CD4-positive, alpha-beta memory T cell (primary cell): ENCODE measurements at regions of chr12 and their contacts with region 1.

Region 1: GRCh38 chr12:57583008-57583831 is 7.8 kb upstream of the PIP4K2C start:
- DNase-seq: peak; percentile 70 to 77 (median 74)
- H3K4me3 ChIP-seq: no peak overlapping the region
- H3K4me3 Mint-ChIP-seq: no peak overlapping the region
- H3K27ac ChIP-seq: no peak overlapping the region
- H3K27ac Mint-ChIP-seq: peak overlapping the region in 2 of 7 donors; percentile 26 to 38
- H3K4me1 ChIP-seq: no peaks in the 10 kb centered on the region
- H3K4me1 Mint-ChIP-seq: peaks cover 3 to 7% (median 5%) of the 10 kb centered on the region in 4 donors
- H3K27me3 ChIP-seq: no peaks in the 10 kb centered on the region
- H3K27me3 Mint-ChIP-seq: peaks cover 6 to 9% of the 10 kb centered on the region in 2 donors

Region 2: GRCh38 chr12:57111031-57111734 is 472.0 kb before region 1 on chr12 and contains the start of gene STAT6:
- CTCF ChIA-PET with region 1: no interaction called
- POLR2A ChIA-PET with region 1: no interaction called
- intact Hi-C with region 1: no loop called
- DNase-seq: peak; percentile 87 to 96 (median 90)
- H3K4me3 ChIP-seq: peak within 1 kb of the TSS; percentile 90 to 99
- H3K4me3 Mint-ChIP-seq: peak within 1 kb of the TSS; percentile 93 to 100 (median 96)
- H3K27ac ChIP-seq: peak within 1 kb of the TSS; percentile 93
- H3K27ac Mint-ChIP-seq: peak within 1 kb of the TSS; percentile 94 to 100 (median 98)
- H3K4me1 ChIP-seq: peaks cover 34% of the 10 kb centered on the region
- H3K4me1 Mint-ChIP-seq: peaks cover 28 to 64% (median 38%) of the 10 kb centered on the region in 4 donors
- H3K27me3 ChIP-seq: no peaks in the 10 kb centered on the region
- H3K27me3 Mint-ChIP-seq: peaks cover 0 to 4% of the 10 kb centered on the region in 2 donors
- total RNA-seq, gene STAT6: 399 to 424 TPM

Region 3: DNA sequence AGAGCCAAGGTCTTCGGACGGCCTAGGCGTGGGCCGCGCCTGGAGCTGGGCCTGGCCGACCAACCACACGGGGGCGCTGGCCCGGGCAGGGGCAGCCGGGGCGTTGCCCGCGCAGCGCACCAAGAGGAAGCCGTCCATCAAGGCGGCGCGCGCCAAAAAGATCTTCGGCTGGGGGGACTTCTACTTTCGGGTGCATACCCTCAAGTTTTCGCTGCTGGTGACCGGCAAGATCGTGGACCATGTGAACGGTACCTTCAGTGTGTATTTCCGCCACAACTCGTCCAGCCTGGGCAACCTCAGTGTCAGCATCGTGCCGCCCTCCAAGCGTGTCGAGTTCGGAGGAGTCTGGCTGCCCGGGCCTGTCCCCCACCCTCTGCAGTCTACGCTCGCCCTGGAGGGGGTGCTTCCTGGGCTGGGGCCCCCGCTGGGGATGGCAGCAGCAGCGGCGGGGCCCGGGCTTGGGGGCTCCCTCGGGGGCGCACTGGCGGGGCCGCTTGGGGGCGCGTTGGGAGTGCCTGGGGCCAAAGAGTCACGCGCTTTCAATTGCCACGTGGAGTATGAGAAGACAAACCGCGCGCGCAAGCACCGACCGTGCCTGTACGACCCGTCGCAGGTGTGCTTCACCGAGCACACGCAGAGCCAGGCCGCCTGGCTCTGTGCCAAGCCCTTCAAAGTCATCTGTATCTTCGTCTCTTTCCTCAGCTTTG is 358.1 kb before region 1 on chr12:
- CTCF ChIA-PET with region 1: no interaction called
- POLR2A ChIA-PET with region 1: no interaction called
- intact Hi-C with region 1: no loop called
- DNase-seq: peak; percentile 56 to 71 (median 65)
- H3K4me3 ChIP-seq: no peak overlapping the region
- H3K4me3 Mint-ChIP-seq: peak overlapping the region in 7 of 8 donors; percentile 45 to 74 (median 60)
- H3K27ac ChIP-seq: no peak overlapping the region
- H3K27ac Mint-ChIP-seq: peak overlapping the region in 4 of 7 donors; percentile 17 to 81 (median 42)
- H3K4me1 ChIP-seq: peaks cover 52% of the 10 kb centered on the region
- H3K4me1 Mint-ChIP-seq: peaks cover 31 to 70% (median 45%) of the 10 kb centered on the region in 4 donors
- H3K27me3 ChIP-seq: peaks cover 59% of the 10 kb centered on the region
- H3K27me3 Mint-ChIP-seq: peaks cover 45 to 53% of the 10 kb centered on the region in 2 donors

Region 4: GRCh38 chr12:57546438-57547383 is 36.5 kb before region 1 on chr12 and contains the start of gene DCTN2:
- CTCF ChIA-PET with region 1: no interaction called
- POLR2A ChIA-PET with region 1: no interaction called
- intact Hi-C with region 1: no loop called
- DNase-seq: peak; percentile 91 to 97 (median 93)
- H3K4me3 ChIP-seq: peak within 1 kb of the TSS; percentile 54 to 71
- H3K4me3 Mint-ChIP-seq: peak within 1 kb of the TSS; percentile 93 to 100 (median 98)
- H3K27ac ChIP-seq: peak within 1 kb of the TSS; percentile 84
- H3K27ac Mint-ChIP-seq: peak within 1 kb of the TSS; percentile 84 to 99 (median 97)
- H3K4me1 ChIP-seq: peaks cover 37% of the 10 kb centered on the region
- H3K4me1 Mint-ChIP-seq: peaks cover 32 to 53% (median 42%) of the 10 kb centered on the region in 4 donors
- H3K27me3 ChIP-seq: no peaks in the 10 kb centered on the region
- H3K27me3 Mint-ChIP-seq: peaks cover 2 to 4% of the 10 kb centered on the region in 2 donors
- total RNA-seq, gene DCTN2: 69.4 to 70.7 TPM

Region 5: DNA sequence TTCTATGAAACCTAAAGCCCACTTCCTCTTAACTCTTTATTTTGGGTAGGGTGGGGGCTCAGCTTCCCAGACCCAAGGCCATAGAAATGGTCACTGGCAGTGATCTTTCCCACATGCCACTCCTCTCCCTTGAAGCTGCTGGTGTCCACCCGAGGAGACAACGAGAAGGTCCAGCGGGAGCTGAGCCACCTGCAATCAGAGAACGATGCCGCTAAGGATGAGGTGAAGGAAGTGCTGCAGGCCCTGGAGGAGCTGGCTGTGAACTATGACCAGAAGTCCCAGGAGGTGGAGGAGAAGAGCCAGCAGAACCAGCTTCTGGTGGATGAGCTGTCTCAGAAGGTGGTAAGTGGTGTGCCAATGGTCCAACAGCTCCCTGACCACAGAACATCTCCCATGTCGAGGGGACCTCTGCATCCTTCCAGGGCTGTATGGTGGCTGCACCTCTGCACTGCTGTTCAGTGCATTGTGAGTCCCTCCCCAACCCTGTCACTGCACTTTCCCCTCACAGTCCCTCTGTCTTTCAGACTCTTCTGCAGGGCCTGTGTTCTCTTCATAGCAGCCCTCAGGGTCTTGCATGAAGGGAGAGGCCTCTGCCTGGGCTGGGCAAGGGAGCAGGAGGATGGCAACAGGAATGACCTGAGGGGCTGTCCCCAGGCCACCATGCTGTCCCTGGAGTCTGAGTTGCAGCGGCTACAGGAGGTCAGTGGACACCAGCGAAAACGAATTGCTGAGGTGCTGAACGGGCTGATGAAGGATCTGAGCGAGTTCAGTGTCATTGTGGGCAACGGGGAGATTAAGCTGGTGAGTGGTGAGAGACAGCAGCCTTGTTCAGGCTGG is 11.1 kb before region 1 on chr12:
- CTCF ChIA-PET with region 1: interaction called, 11 read pairs
- POLR2A ChIA-PET with region 1: no interaction called
- intact Hi-C with region 1: no loop called
- DNase-seq: no peak
- H3K4me3 ChIP-seq: no peak overlapping the region
- H3K4me3 Mint-ChIP-seq: no peak overlapping the region
- H3K27ac ChIP-seq: no peak overlapping the region
- H3K27ac Mint-ChIP-seq: no peak overlapping the region
- H3K4me1 ChIP-seq: no peaks in the 10 kb centered on the region
- H3K4me1 Mint-ChIP-seq: no peaks in the 10 kb centered on the region
- H3K27me3 ChIP-seq: no peaks in the 10 kb centered on the region
- H3K27me3 Mint-ChIP-seq: peaks cover 0 to 9% of the 10 kb centered on the region in 2 donors

Region 6: DNA sequence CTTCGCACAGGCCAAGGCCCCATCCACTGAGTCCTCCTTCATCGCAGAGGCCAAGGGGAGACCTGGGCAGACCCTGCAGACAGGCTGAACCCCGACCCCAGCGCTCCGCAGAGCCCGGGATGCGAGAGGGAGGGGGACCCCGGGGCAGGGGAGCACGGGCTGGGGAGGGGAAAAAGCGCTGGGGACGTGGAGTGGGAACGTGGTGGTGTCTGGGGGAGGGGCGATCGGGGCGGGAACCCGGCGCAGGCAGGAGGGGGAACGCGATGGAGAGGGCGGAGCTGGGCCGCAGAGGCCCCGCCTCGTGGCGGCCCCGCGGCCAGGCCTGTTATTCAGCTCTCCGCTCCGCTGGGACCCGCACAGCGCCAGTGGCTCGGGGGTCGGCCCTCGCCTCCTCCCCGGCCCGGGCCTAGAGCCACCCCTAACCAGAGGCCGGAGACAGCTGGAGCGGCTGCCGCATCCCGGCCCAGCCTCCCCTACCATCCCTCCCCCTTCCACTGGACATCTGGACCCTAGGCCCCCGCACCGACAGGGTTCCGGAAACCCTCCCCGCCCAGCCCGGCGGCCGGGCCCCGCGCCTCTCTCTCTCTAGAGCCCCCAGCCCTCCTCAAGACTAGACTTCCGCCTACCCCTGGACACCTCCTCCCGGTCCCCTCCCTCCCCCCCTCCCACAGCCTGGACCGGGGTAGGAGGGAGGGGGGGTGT is 28.0 kb after region 1 on chr12 and contains the start of gene ARHGEF25:
- CTCF ChIA-PET with region 1: interaction called, 36 read pairs
- POLR2A ChIA-PET with region 1: no interaction called
- intact Hi-C with region 1: no loop called
- DNase-seq: no peak
- H3K4me3 ChIP-seq: peak within 1 kb of the TSS; percentile 23 to 57
- H3K4me3 Mint-ChIP-seq: peak within 1 kb of the TSS; percentile 74 to 89 (median 80)
- H3K27ac ChIP-seq: no peak within 1 kb of the TSS
- H3K27ac Mint-ChIP-seq: peak within 1 kb of the TSS in 4 of 7 donors; percentile 15 to 78 (median 57)
- H3K4me1 ChIP-seq: peaks cover 9% of the 10 kb centered on the region
- H3K4me1 Mint-ChIP-seq: peaks cover 3 to 17% (median 9%) of the 10 kb centered on the region in 4 donors
- H3K27me3 ChIP-seq: peaks cover 10% of the 10 kb centered on the region
- H3K27me3 Mint-ChIP-seq: peaks cover 3 to 21% of the 10 kb centered on the region in 2 donors
- total RNA-seq, gene ARHGEF25: 0.47 to 0.67 TPM

Region 7: GRCh38 chr12:57632694-57633477 is 49.7 kb after region 1 on chr12 and contains the start of gene B4GALNT1:
- CTCF ChIA-PET with region 1: interaction called, 124 read pairs
- POLR2A ChIA-PET with region 1: no interaction called
- intact Hi-C with region 1: loop called (anchors 1 kb)
- DNase-seq: peak in 4 of 5 donors; percentile 57 to 70 (median 61)
- H3K4me3 ChIP-seq: peak within 1 kb of the TSS in 1 of 2 donors; percentile 45
- H3K4me3 Mint-ChIP-seq: peak within 1 kb of the TSS; percentile 31 to 85 (median 74)
- H3K27ac ChIP-seq: no peak within 1 kb of the TSS
- H3K27ac Mint-ChIP-seq: peak within 1 kb of the TSS in 1 of 7 donors; percentile 17
- H3K4me1 ChIP-seq: peaks cover 13% of the 10 kb centered on the region
- H3K4me1 Mint-ChIP-seq: peaks cover 7 to 13% (median 9%) of the 10 kb centered on the region in 4 donors
- H3K27me3 ChIP-seq: peaks cover 25% of the 10 kb centered on the region
- H3K27me3 Mint-ChIP-seq: peaks cover 34 to 47% of the 10 kb centered on the region in 2 donors
- total RNA-seq, gene B4GALNT1: not detected

Region 8: GRCh38 chr12:57782608-57783465 is 199.6 kb after region 1 on chr12 and contains the start of gene TSFM:
- CTCF ChIA-PET with region 1: no interaction called
- POLR2A ChIA-PET with region 1: no interaction called
- intact Hi-C with region 1: loop called (anchors 2 kb)
- DNase-seq: peak; percentile 93 to 96 (median 94)
- H3K4me3 ChIP-seq: peak within 1 kb of the TSS; percentile 92 to 97
- H3K4me3 Mint-ChIP-seq: peak within 1 kb of the TSS; percentile 95 to 100 (median 98)
- H3K27ac ChIP-seq: peak within 1 kb of the TSS; percentile 73
- H3K27ac Mint-ChIP-seq: peak within 1 kb of the TSS; percentile 95 to 100 (median 99)
- H3K4me1 ChIP-seq: peaks cover 59% of the 10 kb centered on the region
- H3K4me1 Mint-ChIP-seq: peaks cover 46 to 57% (median 50%) of the 10 kb centered on the region in 4 donors
- H3K27me3 ChIP-seq: no peaks in the 10 kb centered on the region
- H3K27me3 Mint-ChIP-seq: no peaks in the 10 kb centered on the region
- total RNA-seq, gene TSFM: 18.9 to 22.2 TPM

Region 9: GRCh38 chr12:57795354-57795753 is 212.1 kb after region 1 on chr12:
- CTCF ChIA-PET with region 1: no interaction called
- POLR2A ChIA-PET with region 1: no interaction called
- intact Hi-C with region 1: no loop called
- DNase-seq: no peak
- H3K4me3 ChIP-seq: no peak overlapping the region
- H3K4me3 Mint-ChIP-seq: no peak overlapping the region
- H3K27ac ChIP-seq: no peak overlapping the region
- H3K27ac Mint-ChIP-seq: no peak overlapping the region
- H3K4me1 ChIP-seq: no peaks in the 10 kb centered on the region
- H3K4me1 Mint-ChIP-seq: peaks cover 0 to 4% (median 0%) of the 10 kb centered on the region in 4 donors
- H3K27me3 ChIP-seq: no peaks in the 10 kb centered on the region
- H3K27me3 Mint-ChIP-seq: no peaks in the 10 kb centered on the region